AG04449 (cell line): ENCODE measurements at regions of chr5 and their contacts with region 1.

Region 1: DNA sequence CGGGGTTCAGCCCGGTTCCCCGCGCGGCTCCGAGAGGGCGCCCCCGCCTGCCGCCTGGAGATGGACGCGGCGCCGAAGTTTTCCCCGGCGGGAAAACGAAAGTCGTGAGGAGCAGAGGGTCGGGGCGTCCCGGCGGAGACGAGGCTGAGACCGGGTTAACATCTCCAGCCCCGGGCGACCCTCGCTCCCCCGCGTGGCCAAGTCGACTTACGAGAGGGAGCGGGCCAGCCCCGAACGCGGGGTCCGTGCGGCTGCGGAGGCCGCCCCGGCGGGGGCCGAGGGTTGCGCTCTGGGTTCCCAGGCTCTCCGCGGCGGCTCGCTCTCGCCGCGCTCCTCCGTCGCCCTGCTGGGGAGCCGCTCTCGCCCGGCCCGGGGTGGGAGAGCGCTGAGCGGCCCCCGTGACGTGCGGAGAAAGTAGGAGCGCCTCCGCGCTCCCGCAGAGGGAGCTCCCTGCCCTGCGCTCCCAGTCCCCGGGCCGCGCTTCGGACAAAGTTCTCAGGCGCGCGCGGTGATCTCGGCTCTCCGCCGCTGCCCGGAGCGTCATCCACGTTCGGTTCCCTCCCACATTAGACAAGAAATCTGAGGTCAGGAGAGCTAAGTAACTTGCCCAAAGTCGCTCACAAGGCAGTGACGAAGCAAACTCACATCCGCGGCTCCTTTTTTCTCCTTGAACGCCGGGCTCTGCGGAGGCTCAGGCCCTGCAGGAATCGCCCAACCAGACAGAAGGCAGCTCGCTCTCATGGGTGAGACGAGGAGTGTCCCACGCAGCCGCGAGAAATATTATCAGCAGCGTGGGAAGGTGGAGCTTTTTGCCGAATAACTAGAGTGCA is 1.2 kb upstream of the GCNT4 start:
- DNase-seq: peak; percentile 50
- H3K4me3 ChIP-seq: peak overlapping the region; percentile 71
- CTCF ChIP-seq: peak; percentile 26

Region 2: DNA sequence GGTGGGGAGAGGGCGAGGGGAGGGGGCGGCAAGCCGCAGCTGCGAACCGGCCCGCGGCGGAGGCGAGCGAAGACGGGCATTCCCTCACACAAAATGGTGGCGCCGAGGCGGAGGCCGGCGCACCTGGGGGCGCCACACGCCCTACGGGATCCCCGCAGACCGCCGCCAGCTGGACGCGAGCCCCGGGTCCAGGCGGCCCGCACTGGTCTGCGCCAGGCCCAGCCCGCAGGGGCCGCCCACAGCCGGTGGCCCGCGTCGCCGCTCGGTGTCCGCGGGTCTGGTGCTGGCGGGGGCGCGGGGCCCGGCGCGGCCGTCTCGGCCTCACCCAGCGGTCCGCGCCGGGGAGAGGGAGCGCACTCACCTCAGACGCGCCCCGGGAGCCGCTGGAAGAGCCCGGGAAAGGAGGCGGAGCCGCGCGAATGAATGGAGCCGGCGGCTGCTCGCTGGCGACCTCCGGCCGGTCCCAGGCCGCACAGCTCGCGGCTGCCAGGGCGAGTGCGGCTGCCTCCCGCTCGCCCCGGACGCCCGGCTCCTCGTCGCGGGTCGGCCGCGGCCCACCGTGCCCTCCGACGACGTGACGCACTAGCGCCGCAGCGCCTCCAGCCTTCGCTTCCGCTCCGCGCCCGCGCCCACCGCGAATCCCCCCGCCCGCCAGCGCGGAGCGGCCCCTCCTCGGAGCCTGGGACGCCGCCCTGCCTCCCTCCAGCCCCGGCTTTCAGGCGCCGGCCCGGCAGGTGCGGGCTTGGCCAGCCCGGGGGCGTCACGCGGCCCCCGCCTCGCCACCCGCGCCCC is 187.5 kb before region 1 on chr5 and contains the start of gene FAM169A:
- CTCF ChIA-PET with region 1: no interaction called
- POLR2A ChIA-PET with region 1: no interaction called
- DNase-seq: no peak
- H3K4me3 ChIP-seq: peak within 1 kb of the TSS; percentile 55
- CTCF ChIP-seq: no peak

Region 3: GRCh38 chr5:74927336-74927735 is 126.2 kb before region 1 on chr5:
- CTCF ChIA-PET with region 1: interaction called, 20 read pairs
- POLR2A ChIA-PET with region 1: no interaction called
- DNase-seq: no peak
- H3K4me3 ChIP-seq: no peak overlapping the region
- CTCF ChIP-seq: no peak

Region 4: DNA sequence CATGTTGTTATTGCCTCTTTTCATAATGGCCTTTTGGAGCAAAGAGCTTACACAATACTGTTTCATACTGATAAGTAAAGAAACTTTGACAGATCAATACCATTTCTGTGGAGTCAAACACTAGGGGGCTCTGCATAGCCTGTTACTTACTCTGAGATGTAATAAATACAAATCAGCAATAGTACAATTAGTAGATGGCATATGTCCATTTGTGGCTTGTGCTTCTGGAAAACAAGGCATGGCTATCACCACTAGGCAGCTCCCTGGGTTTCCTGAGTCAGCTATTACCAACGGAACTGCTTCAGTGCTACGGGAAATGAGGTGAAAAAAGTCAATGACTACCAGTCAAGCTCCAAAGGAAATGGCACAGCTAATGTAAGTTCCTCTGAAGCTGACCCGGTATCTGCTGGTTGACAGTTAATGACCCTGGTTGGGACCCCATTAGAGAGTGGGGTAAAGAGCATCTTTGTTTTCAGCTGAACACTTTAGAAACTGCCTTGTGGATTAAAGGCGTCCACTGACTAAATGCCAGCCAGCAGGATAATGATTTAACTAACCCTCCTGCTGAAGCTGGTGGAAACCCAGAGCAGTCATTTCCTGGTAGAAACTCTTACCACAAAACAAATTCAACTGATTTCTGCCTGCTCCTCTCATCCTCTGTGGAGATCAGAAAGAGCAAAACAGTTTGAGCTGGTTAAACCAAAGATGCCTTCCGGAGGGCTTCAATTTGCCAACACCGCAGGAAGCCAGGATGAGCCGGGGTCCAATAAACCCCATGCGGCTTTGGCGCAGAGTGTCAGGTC is 118.4 kb before region 1 on chr5:
- CTCF ChIA-PET with region 1: interaction called, 14 read pairs
- POLR2A ChIA-PET with region 1: interaction called, 5 read pairs
- DNase-seq: no peak
- H3K4me3 ChIP-seq: no peak overlapping the region
- CTCF ChIP-seq: peak; percentile 15

Region 5: GRCh38 chr5:75037135-75037534 is 16.4 kb before region 1 on chr5:
- CTCF ChIA-PET with region 1: interaction called, 60 read pairs
- POLR2A ChIA-PET with region 1: no interaction called
- DNase-seq: peak; percentile 51
- H3K4me3 ChIP-seq: no peak overlapping the region
- CTCF ChIP-seq: no peak